ENCODE measurements at regions of chr2 and their contacts with region 1.

Region 1: GRCh38 chr2:231452799-231453508 is 11.3 kb downstream of the NCL start:
- DNase-seq: no peak
- H3K4me3 ChIP-seq: no peak overlapping the region
- H3K4me3 Mint-ChIP-seq: no peak overlapping the region
- H3K27ac ChIP-seq: no peak overlapping the region
- H3K27ac Mint-ChIP-seq: peak overlapping the region in 5 of 7 donors; percentile 19 to 80 (median 52)
- H3K4me1 ChIP-seq: no peaks in the 10 kb centered on the region
- H3K4me1 Mint-ChIP-seq: peaks cover 1% of the 10 kb centered on the region
- H3K27me3 ChIP-seq: no peaks in the 10 kb centered on the region
- H3K27me3 Mint-ChIP-seq: peaks cover 0 to 6% (median 0%) of the 10 kb centered on the region in 3 donors
- CTCF ChIP-seq: no peak

Region 2: GRCh38 chr2:231104115-231104713 is 348.7 kb before region 1 on chr2:
- intact Hi-C with region 1: loop called (anchors 5 to 10 kb)
- DNase-seq: peak; percentile 3 to 30 (median 27)
- H3K4me3 ChIP-seq: no peak overlapping the region
- H3K4me3 Mint-ChIP-seq: no peak overlapping the region
- H3K27ac ChIP-seq: no peak overlapping the region
- H3K27ac Mint-ChIP-seq: no peak overlapping the region
- H3K4me1 ChIP-seq: no peaks in the 10 kb centered on the region
- H3K4me1 Mint-ChIP-seq: no peaks in the 10 kb centered on the region
- H3K27me3 ChIP-seq: no peaks in the 10 kb centered on the region
- H3K27me3 Mint-ChIP-seq: peaks cover 0 to 2% (median 0%) of the 10 kb centered on the region in 3 donors
- CTCF ChIP-seq: peak; percentile 78

Region 3: GRCh38 chr2:231227309-231228162 is 225.4 kb before region 1 on chr2:
- intact Hi-C with region 1: loop called (anchors 2 to 5 kb)
- DNase-seq: peak; percentile 62 to 80 (median 62)
- H3K4me3 ChIP-seq: no peak overlapping the region
- H3K4me3 Mint-ChIP-seq: no peak overlapping the region
- H3K27ac ChIP-seq: no peak overlapping the region
- H3K27ac Mint-ChIP-seq: peak overlapping the region in 1 of 7 donors; percentile 24
- H3K4me1 ChIP-seq: peaks cover 5 to 10% of the 10 kb centered on the region in 2 donors
- H3K4me1 Mint-ChIP-seq: no peaks in the 10 kb centered on the region
- H3K27me3 ChIP-seq: no peaks in the 10 kb centered on the region
- H3K27me3 Mint-ChIP-seq: peaks cover 0 to 3% (median 0%) of the 10 kb centered on the region in 3 donors
- CTCF ChIP-seq: peak; percentile 82